HEK293 (cell line): ENCODE measurements at regions of chr17 and their contacts with region 1.

Region 1: DNA sequence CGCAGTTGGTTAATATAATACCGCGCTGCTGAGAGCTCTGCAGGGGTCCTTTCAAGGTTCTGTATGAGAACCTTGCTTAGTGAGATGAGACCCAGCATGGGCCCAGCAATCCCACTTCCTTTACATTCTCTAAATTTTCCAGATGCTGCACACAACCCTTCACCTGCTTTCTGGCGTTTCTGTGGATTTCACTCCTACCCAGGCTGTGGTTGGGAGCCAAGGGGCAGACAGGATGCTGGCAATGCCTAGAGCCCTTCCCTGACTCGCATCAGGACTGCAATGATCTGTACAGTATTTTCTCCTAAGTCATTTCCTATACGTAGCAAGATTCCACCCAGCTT is 10.1 kb upstream of the PIPOX start:
- H3K4me3 ChIP-seq: no peak overlapping the region
- H3K27ac ChIP-seq: no peak overlapping the region
- H3K4me1 ChIP-seq: no peaks in the 10 kb centered on the region
- CTCF ChIP-seq: no peak

Region 2: GRCh38 chr17:28982131-28982951 is 50.5 kb before region 1 on chr17:
- CTCF ChIA-PET with region 1: no interaction called
- POLR2A ChIA-PET with region 1: no interaction called
- H3K4me3 ChIP-seq: no peak overlapping the region
- H3K27ac ChIP-seq: no peak overlapping the region
- H3K4me1 ChIP-seq: no peaks in the 10 kb centered on the region
- CTCF ChIP-seq: no peak

Region 3: GRCh38 chr17:29042679-29043538 is 10.1 kb after region 1 on chr17 and contains the start of gene PIPOX:
- CTCF ChIA-PET with region 1: interaction called, 10 read pairs
- POLR2A ChIA-PET with region 1: interaction called, 3 read pairs
- H3K4me3 ChIP-seq: no peak within 1 kb of the TSS
- H3K27ac ChIP-seq: no peak within 1 kb of the TSS
- H3K4me1 ChIP-seq: peaks cover 5% of the 10 kb centered on the region
- CTCF ChIP-seq: peak; percentile 38

Region 4: DNA sequence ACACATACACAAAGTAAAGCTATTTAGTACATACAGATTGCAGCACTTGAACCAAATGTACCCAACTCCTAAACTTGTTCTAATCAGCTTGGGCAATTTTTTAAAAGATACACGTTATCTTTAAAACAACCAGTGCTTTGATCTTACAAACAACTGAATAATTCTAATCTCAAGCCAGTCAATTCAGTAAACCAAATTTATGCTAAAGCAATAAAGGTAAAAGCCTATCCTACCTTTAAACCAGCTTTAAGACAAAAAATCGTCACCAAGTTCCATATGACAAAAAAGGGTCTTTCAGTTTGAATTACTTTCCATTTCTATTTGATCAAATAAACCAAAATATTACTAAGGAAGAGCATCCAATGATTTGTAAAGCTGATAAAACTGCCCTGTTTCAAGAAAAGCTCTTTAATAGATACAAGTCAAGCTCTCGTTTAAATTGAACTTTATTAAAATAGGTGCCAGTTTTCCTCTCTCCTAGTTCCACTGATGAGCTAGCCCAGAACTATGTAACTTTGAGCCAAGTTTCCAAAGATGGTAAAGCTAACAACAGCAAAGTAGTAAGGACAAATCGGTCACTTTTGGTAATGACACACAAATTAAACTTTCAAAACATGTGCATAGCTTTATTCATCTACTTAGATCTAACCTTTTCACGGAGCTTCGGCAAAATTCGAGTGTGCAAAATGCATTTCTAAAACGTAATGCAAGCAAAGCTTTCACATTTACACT is 224.1 kb after region 1 on chr17:
- CTCF ChIA-PET with region 1: no interaction called
- POLR2A ChIA-PET with region 1: no interaction called
- H3K4me3 ChIP-seq: no peak overlapping the region
- H3K27ac ChIP-seq: no peak overlapping the region
- H3K4me1 ChIP-seq: peaks cover 3% of the 10 kb centered on the region; the same call in 1 of the 2 replicates
- CTCF ChIP-seq: no peak